ENCODE measurements at regions of chr1 and their contacts with region 1.

Region 1: DNA sequence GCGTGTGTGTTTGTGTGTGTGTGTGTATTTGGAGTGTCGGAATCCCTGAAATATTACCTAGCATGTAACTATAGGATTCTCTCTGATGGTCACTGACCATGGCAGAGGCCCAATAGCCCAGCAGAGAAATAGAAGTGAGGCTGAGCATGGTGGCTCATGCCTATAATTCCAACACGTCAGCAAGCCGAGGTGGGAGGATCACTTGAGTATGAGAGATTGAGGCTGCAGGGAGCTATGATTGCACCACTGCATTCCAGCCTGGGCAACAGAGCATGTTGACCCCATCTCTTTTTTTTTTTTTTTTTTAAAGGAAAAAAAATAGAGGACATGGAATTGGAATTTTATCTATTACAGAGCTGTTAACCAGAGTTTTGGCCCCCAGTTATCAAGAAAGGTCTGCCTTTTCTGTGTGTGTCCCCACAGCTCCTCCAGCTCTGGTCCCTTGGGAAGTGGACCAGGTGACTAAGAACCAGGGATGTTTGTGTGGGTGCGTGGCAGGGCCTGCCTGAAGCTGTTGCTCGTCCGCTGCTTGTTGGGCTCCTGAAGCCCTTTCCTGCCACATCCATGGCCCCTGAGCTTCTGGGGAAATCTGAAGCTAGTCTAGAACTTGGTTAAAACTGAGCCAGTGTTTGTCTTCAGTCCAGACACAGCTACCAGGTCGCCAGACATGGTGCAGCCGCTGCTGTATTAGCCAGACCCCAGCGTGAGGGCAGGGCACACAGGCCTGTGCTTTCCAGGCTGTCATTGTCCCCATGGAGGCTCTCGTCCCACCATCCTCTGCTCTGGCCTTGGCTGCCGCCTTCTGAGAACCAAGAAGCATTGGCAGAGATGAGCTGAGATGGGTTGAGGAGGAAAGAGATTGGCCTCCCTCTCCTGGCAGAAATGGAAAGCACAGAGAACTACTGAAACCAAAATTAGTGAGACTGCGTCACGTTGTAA is 25.5 kb downstream of the CAPN9 start:
- DNase-seq: peak; percentile 62
- H3K4me3 Mint-ChIP-seq: no peak overlapping the region
- H3K27ac Mint-ChIP-seq: no peak overlapping the region
- H3K4me1 Mint-ChIP-seq: no peaks in the 10 kb centered on the region
- H3K27me3 Mint-ChIP-seq: no peaks in the 10 kb centered on the region
- CTCF ChIP-seq: peak; percentile 51

Region 2: DNA sequence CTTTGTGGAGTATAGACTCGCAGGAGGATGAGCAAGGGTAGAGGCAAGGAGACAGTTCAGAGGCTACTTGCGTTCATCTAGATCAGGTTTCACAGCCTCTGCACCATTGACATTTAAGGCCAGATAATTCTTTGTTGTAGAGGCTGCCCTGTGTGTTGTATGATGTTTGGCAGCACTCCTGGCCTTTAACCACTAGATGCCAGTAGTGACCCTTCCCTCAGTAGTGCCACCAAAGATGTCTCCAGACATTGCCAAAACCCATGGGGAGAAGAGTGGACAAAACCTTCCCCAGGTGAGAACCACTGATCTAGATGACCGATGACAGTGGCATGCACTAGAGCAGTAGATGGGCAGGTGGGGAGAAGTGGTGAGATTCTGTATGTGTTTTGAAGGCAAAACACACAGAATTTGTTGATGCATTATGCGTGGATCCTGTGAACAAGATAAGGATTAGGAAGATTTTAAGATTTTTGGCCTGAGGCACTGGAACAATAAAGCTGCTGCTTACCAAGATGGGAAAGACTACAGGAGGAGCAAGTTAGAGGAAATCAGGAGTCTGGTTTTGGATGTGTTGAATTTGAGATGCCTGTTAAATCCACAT is 140.4 kb before region 1 on chr1:
- CTCF ChIA-PET with region 1: no interaction called
- intact Hi-C with region 1: loop called (anchors 1 kb)
- DNase-seq: peak; percentile 54
- H3K4me3 Mint-ChIP-seq: no peak overlapping the region
- H3K27ac Mint-ChIP-seq: no peak overlapping the region
- H3K4me1 Mint-ChIP-seq: no peaks in the 10 kb centered on the region
- H3K27me3 Mint-ChIP-seq: no peaks in the 10 kb centered on the region
- CTCF ChIP-seq: peak; percentile 78

Region 3: GRCh38 chr1:230642263-230642959 is 130.3 kb before region 1 on chr1 and contains the start of gene COG2:
- CTCF ChIA-PET with region 1: interaction called, 11 read pairs
- intact Hi-C with region 1: no loop called
- DNase-seq: peak; percentile 99
- H3K4me3 Mint-ChIP-seq: peak within 1 kb of the TSS; percentile 99
- H3K27ac Mint-ChIP-seq: peak within 1 kb of the TSS; percentile 95
- H3K4me1 Mint-ChIP-seq: peaks cover 47% of the 10 kb centered on the region
- H3K27me3 Mint-ChIP-seq: no peaks in the 10 kb centered on the region
- CTCF ChIP-seq: peak; percentile 99
- total RNA-seq, gene COG2: 55.0 and 59.2 TPM in 2 replicates

Region 4: GRCh38 chr1:230713915-230714764 is 58.6 kb before region 1 on chr1 and contains the start of gene AGT:
- CTCF ChIA-PET with region 1: interaction called, 8 read pairs
- intact Hi-C with region 1: loop called (anchors 2 kb)
- DNase-seq: peak; percentile 79
- H3K4me3 Mint-ChIP-seq: peak within 1 kb of the TSS; percentile 66
- H3K27ac Mint-ChIP-seq: peak within 1 kb of the TSS; percentile 63
- H3K4me1 Mint-ChIP-seq: peaks cover 44% of the 10 kb centered on the region
- H3K27me3 Mint-ChIP-seq: no peaks in the 10 kb centered on the region
- CTCF ChIP-seq: no peak
- total RNA-seq, gene AGT: 27.5 and 49.6 TPM in 2 replicates

Region 5: GRCh38 chr1:230744382-230744781 is 28.3 kb before region 1 on chr1:
- CTCF ChIA-PET with region 1: interaction called, 23 read pairs
- intact Hi-C with region 1: loop called (anchors 1 kb)
- DNase-seq: no peak
- H3K4me3 Mint-ChIP-seq: no peak overlapping the region
- H3K27ac Mint-ChIP-seq: no peak overlapping the region
- H3K4me1 Mint-ChIP-seq: peaks cover 21% of the 10 kb centered on the region
- H3K27me3 Mint-ChIP-seq: no peaks in the 10 kb centered on the region
- CTCF ChIP-seq: no peak

Region 6: DNA sequence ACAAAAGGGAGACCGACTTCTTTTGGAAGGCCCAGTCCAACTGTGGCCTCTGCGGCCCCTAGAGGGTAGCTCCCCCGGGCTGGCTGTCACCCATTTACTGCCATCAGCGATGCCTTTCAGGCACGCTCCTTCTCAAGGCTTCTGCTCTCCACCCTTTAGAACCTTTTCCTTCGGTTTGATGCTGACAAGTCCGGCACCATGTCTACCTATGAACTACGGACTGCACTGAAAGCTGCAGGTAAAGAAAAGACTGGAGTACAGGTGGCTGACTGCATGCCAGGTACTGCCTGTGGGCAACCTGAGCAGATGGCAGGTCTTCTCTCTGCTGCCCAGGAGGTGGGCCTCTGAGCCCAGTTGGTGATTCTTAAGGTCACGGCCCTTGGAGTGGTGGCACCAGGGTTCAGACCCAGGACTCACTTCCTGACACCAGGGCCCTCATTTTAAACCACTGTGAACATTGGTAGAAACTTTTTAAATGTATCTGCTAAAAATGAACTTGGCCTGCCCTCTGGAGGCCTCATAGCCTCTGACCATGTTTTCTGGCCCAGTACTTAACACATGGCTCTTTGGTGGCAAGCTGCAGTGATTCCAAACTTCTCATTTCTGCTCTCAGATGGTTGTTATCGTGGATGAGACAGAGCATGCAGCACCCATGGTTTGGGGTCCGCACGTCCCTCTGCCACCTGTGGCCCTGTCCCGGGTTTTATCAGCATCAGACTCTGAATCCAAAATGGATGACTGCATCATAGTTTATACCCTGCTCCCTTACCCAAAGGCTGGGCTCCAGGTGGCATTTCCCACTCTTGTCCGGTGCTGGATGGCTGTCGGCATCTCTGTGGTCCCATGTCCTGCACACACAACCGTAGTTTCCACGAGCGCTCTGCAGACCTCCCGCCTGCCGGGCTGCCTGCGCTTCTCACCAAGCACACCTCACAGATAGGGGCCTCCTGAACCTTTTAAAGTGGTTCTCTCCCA is 20.3 kb after region 1 on chr1:
- CTCF ChIA-PET with region 1: no interaction called
- intact Hi-C with region 1: no loop called
- DNase-seq: no peak
- H3K4me3 Mint-ChIP-seq: no peak overlapping the region
- H3K27ac Mint-ChIP-seq: no peak overlapping the region
- H3K4me1 Mint-ChIP-seq: no peaks in the 10 kb centered on the region
- H3K27me3 Mint-ChIP-seq: peaks cover 7% of the 10 kb centered on the region
- CTCF ChIP-seq: no peak